PC-3 (cell line): ENCODE measurements at regions of chr20 and their contacts with region 1.

Region 1: GRCh38 chr20:32445539-32446273 is 87.6 kb downstream of the ASXL1 start:
- DNase-seq: no peak
- ATAC-seq: peak; percentile 56
- H3K4me3 ChIP-seq: no peak overlapping the region
- H3K27ac ChIP-seq: no peak overlapping the region
- H3K4me1 ChIP-seq: no peaks in the 10 kb centered on the region
- H3K27me3 ChIP-seq: no peaks in the 10 kb centered on the region
- CTCF ChIP-seq: no peak

Region 2: DNA sequence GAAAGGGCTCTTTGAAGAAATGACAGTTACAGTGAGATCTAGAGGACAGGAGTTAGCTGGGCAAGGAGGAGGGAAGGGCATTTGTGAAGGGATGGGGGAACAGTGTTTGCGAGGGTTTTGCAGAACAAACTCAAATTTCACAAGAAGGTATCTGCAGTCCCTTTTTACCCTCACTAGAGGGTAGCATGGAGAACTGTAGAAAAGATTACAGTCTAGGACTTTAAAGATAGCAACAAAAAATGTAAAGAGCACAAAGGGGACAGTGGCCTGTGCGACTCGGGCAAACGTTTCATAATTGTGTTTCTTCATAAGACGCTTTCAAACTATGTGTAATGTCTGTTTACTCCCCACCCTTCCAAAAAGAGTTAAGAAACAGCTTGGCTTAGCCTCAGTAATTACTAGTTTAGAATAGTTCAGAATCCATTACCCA is 108.8 kb before region 1 on chr20:
- CTCF ChIA-PET with region 1: no interaction called
- POLR2A ChIA-PET with region 1: no interaction called
- intact Hi-C with region 1: loop called (anchors 10 kb)
- DNase-seq: peak; percentile 66
- ATAC-seq: peak; percentile 71
- H3K4me3 ChIP-seq: no peak overlapping the region
- H3K27ac ChIP-seq: no peak overlapping the region
- H3K4me1 ChIP-seq: peaks cover 13% of the 10 kb centered on the region
- H3K27me3 ChIP-seq: no peaks in the 10 kb centered on the region
- CTCF ChIP-seq: peak; percentile 67

Region 3: DNA sequence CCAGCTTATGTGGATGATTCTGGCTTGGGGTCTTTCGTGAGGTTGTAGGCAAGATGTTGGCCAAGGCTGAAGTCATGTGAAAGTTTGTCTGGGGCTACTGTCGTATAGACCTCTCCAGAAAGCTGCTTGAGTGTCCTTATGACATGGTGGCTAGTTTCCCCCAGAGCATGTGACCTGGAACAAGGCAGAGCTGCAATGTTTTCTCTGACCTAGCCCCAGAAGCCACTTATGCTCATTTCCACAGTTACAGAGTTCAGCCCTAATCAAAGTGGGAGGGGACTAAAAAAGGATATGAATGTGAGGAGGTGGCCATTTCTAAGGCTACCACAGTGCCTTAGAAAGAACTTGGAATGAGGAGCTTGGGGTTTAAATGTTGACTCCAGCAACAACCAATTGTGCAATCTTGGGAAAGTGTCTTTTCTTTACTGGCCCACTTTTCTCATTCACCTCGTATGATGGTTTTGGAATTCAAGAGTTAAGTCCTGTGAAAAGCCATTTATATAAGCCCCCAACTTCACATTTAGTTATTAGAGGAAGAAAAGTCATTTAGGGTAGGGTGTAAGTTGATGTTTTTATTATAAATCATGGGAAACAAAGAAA is 93.5 kb before region 1 on chr20:
- CTCF ChIA-PET with region 1: no interaction called
- POLR2A ChIA-PET with region 1: no interaction called
- intact Hi-C with region 1: no loop called
- DNase-seq: no peak
- ATAC-seq: no peak
- H3K4me3 ChIP-seq: no peak overlapping the region
- H3K27ac ChIP-seq: no peak overlapping the region
- H3K4me1 ChIP-seq: peaks cover 34% of the 10 kb centered on the region
- H3K27me3 ChIP-seq: no peaks in the 10 kb centered on the region
- CTCF ChIP-seq: no peak

Region 4: GRCh38 chr20:32474967-32475811 is 29.5 kb after region 1 on chr20:
- CTCF ChIA-PET with region 1: no interaction called
- POLR2A ChIA-PET with region 1: no interaction called
- intact Hi-C with region 1: no loop called
- DNase-seq: peak; percentile 84
- ATAC-seq: peak; percentile 92
- H3K4me3 ChIP-seq: peak overlapping the region; percentile 51
- H3K27ac ChIP-seq: peak overlapping the region; percentile 83
- H3K4me1 ChIP-seq: peaks cover 22% of the 10 kb centered on the region
- H3K27me3 ChIP-seq: no peaks in the 10 kb centered on the region
- CTCF ChIP-seq: no peak